Activated naive CD4-positive, alpha-beta T cell treated with anti-CD3 and anti-CD28 coated beads, Interleukin-2, amount 10 ng/mL, durations not matched to agents 7 days and 5 days (primary cell): ENCODE measurements at regions of chr3 and their contacts with region 1.

Region 1: GRCh38 chr3:152071924-152072323 is 196.8 kb upstream of the MBNL1 start:
- DNase-seq: peak; percentile 21
- H3K4me3 Mint-ChIP-seq: no peak overlapping the region
- H3K27ac Mint-ChIP-seq: no peak overlapping the region
- H3K4me1 Mint-ChIP-seq: no peaks in the 10 kb centered on the region
- H3K27me3 Mint-ChIP-seq: peaks cover 4% of the 10 kb centered on the region

Region 2: DNA sequence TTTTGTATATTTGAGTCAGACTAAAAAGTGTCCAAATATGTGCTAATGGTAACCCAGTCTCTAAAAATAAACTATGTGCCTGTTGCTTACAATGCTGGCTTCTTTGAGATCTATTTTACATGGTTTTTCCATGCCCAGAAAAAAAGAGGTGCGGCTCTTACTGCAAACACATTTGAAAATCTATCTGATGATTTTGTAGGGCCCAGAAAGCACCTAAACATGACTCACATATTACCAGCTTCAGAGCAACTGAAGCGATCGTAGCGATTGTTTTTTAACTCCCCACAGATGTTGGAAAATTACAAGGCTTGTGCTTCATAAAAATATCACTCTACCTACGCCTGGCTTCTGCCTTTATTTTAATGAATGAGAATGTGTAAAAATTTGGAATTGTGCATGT is 145.0 kb before region 1 on chr3:
- CTCF ChIA-PET with region 1: no interaction called
- DNase-seq: no peak
- H3K4me3 Mint-ChIP-seq: no peak overlapping the region
- H3K27ac Mint-ChIP-seq: no peak overlapping the region
- H3K4me1 Mint-ChIP-seq: no peaks in the 10 kb centered on the region
- H3K27me3 Mint-ChIP-seq: peaks cover 4% of the 10 kb centered on the region

Region 3: GRCh38 chr3:152405915-152406802 is 334.2 kb after region 1 on chr3:
- CTCF ChIA-PET with region 1: no interaction called
- DNase-seq: no peak
- H3K4me3 Mint-ChIP-seq: no peak overlapping the region
- H3K27ac Mint-ChIP-seq: no peak overlapping the region
- H3K4me1 Mint-ChIP-seq: peaks cover 37% of the 10 kb centered on the region
- H3K27me3 Mint-ChIP-seq: no peaks in the 10 kb centered on the region

Region 4: DNA sequence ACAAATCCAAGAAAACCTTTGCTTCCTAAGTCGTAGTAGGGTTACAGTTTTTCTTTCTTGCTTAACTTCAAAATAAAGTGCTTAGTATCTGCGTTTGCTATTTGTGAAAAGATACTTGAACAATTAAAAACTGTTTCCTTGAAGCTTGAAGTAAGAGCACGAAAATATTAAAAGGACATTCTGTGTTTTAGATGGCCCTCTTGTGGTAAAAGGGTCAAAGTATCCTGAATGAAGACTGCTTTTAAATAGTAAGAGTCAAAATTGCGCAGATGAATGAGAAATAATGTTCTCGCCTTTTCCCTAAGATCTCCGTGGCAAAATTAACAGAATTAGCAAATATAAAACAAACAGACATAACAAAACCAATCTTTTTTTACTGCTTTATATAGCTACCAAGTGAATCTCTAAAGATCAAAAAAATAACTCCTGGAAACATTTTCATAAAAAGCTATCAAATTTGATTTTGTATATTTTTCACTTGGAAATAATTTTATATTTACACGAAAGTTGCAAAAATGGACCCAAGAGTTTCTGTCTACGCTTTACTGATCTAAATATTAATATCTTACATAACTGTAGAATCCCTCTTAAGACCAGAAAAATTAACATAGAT is 372.2 kb after region 1 on chr3:
- CTCF ChIA-PET with region 1: interaction called, 17 read pairs
- DNase-seq: no peak
- H3K4me3 Mint-ChIP-seq: no peak overlapping the region
- H3K27ac Mint-ChIP-seq: no peak overlapping the region
- H3K4me1 Mint-ChIP-seq: peaks cover 50% of the 10 kb centered on the region
- H3K27me3 Mint-ChIP-seq: no peaks in the 10 kb centered on the region

Region 5: GRCh38 chr3:152471814-152472671 is 400.1 kb after region 1 on chr3:
- CTCF ChIA-PET with region 1: interaction called, 26 read pairs
- DNase-seq: peak; percentile 79
- H3K4me3 Mint-ChIP-seq: no peak overlapping the region
- H3K27ac Mint-ChIP-seq: peak overlapping the region; percentile 33
- H3K4me1 Mint-ChIP-seq: peaks cover 7% of the 10 kb centered on the region
- H3K27me3 Mint-ChIP-seq: no peaks in the 10 kb centered on the region

Region 6: GRCh38 chr3:152524198-152525140 is 452.5 kb after region 1 on chr3:
- CTCF ChIA-PET with region 1: interaction called, 11 read pairs
- DNase-seq: peak; percentile 60
- H3K4me3 Mint-ChIP-seq: no peak overlapping the region
- H3K27ac Mint-ChIP-seq: no peak overlapping the region
- H3K4me1 Mint-ChIP-seq: no peaks in the 10 kb centered on the region
- H3K27me3 Mint-ChIP-seq: no peaks in the 10 kb centered on the region

Region 7: GRCh38 chr3:152574461-152575079 is 502.6 kb after region 1 on chr3:
- CTCF ChIA-PET with region 1: interaction called, 14 read pairs
- DNase-seq: peak; percentile 58
- H3K4me3 Mint-ChIP-seq: no peak overlapping the region
- H3K27ac Mint-ChIP-seq: no peak overlapping the region
- H3K4me1 Mint-ChIP-seq: no peaks in the 10 kb centered on the region
- H3K27me3 Mint-ChIP-seq: peaks cover 11% of the 10 kb centered on the region